ENCODE measurements at regions of chr17 and their contacts with region 1.

Region 1: GRCh38 chr17:78250891-78251794 is 19.7 kb downstream of the TMEM235 start:
- DNase-seq: peak; percentile 86 to 97
- H3K4me3 ChIP-seq: peak overlapping the region in 3 of 4 experiments; percentile 6 to 23 (median 17); a peak in 1 of 8 replicates
- H3K27ac ChIP-seq: no peak overlapping the region
- H3K4me1 ChIP-seq: peaks cover 0 to 23% (median 13%) of the 10 kb centered on the region in 4 experiments; a peak in 5 of 7 replicates
- H3K27me3 ChIP-seq: no peaks in the 10 kb centered on the region
- CTCF ChIP-seq: peak; percentile 99
- EP300 ChIP-seq: no peak; a peak in 1 of 3 replicates
- POLR2A ChIP-seq: no peak
- RAD21 ChIP-seq: peak; percentile 93 to 95

Region 2: DNA sequence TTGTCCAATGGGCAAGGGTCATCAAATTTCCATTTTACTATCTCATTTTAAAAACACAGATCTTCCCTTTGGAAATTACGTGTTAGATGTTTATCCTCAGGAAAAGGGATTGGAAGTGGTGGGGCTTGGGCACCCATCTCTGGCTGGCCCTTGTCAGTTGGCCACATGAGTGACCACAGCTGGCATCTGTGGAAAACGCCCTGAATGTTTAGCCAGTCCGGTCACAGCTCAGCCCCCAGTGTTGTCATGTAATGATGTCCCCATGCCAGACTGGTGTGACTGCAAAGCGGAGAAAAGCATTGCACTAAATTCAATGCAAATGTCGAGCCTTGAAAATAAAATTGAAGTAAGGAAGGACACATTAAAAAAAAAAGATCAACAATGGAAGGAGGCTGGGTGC is 175.6 kb before region 1 on chr17:
- CTCF ChIA-PET with region 1: no interaction called
- POLR2A ChIA-PET with region 1: no interaction called
- DNase-seq: no peak
- H3K4me3 ChIP-seq: no peak overlapping the region
- H3K27ac ChIP-seq: no peak overlapping the region
- H3K4me1 ChIP-seq: no peaks in the 10 kb centered on the region
- H3K27me3 ChIP-seq: no peaks in the 10 kb centered on the region
- CTCF ChIP-seq: no peak
- EP300 ChIP-seq: no peak
- POLR2A ChIP-seq: no peak
- RAD21 ChIP-seq: no peak

Region 3: DNA sequence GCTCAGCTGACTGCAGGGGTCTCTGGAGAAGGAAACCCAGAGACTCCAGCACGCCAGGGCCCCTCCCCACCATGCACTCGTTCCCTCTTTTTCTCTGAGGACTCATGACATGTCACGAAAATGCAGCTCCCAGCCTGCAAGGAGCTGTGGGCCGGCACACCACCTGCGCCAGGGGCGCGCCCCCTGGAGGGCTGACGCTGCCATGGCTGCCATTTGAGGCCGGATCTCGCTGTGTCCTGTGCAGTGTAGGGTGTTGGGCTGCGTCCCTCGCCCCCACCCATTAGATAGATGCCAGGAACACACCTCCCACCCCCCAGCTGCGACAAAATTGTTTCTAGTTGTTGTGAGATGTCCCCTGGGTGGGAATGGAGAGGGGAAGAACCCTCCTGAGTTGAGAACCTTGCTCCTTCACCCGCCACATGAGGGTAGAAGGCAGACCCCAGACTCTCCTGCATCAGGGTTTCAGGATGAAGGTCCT is 74.6 kb before region 1 on chr17:
- CTCF ChIA-PET with region 1: interaction called, 44 read pairs
- POLR2A ChIA-PET with region 1: interaction called, 6 read pairs
- DNase-seq: peak in 1 of 2 experiments; percentile 92
- H3K4me3 ChIP-seq: no peak overlapping the region
- H3K27ac ChIP-seq: no peak overlapping the region
- H3K4me1 ChIP-seq: peaks cover 5 to 17% (median 7%) of the 10 kb centered on the region in 4 experiments
- H3K27me3 ChIP-seq: no peaks in the 10 kb centered on the region
- CTCF ChIP-seq: peak; percentile 89 to 99 (median 94)
- EP300 ChIP-seq: no peak
- POLR2A ChIP-seq: peak in 1 of 2 experiments; percentile 49; a peak in 1 of 3 replicates
- RAD21 ChIP-seq: peak; percentile 48 to 70

Region 4: DNA sequence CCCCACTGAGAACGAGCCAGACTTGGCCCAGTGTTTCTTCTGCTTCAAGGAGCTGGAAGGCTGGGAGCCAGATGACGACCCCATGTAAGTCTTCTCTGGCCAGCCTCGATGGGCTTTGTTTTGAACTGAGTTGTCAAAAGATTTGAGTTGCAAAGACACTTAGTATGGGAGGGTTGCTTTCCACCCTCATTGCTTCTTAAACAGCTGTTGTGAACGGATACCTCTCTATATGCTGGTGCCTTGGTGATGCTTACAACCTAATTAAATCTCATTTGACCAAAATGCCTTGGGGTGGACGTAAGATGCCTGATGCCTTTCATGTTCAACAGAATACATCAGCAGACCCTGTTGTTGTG is 36.5 kb before region 1 on chr17:
- CTCF ChIA-PET with region 1: interaction called, 35 read pairs
- POLR2A ChIA-PET with region 1: interaction called, 3 read pairs
- DNase-seq: no peak
- H3K4me3 ChIP-seq: peak overlapping the region; percentile 85 to 94 (median 90)
- H3K27ac ChIP-seq: no peak overlapping the region
- H3K4me1 ChIP-seq: peaks cover 0 to 8% (median 4%) of the 10 kb centered on the region in 4 experiments; a peak in 4 of 7 replicates
- H3K27me3 ChIP-seq: no peaks in the 10 kb centered on the region
- CTCF ChIP-seq: no peak
- EP300 ChIP-seq: no peak
- POLR2A ChIP-seq: no peak
- RAD21 ChIP-seq: no peak

Region 5: DNA sequence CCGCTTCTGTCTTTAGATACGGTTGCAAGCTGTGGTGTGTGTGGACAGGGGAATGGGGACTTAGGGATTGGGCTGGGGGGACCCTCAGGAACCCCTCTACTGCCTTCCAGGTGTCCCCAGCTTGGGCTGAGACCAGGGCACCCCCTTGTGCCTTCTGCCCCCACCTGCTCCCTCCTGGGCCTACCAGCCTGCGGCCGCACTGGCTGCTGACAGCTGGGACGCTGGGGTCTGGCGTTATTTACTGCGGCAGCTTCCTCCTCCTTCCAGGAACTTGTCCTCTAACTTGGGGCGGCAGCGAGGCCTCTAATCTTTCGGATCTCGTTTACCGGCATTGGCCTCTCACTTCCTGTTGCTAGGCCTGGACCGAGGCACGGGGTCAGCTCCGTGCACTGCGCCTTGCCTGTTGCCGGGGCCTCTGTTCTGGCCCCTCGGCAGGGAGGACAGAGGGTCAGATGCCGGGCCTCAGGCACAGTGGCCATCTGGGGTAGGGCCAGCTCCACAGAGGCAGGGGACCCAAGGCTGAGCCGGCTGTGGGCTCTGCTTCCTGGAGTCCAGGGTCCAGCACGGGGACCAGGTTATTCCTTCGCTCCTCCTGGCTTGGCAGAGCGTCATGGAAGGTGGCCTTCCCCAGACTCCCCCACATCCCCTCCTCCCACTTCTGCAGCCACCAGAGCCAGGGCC is 12.1 kb after region 1 on chr17:
- CTCF ChIA-PET with region 1: interaction called, 50 read pairs
- POLR2A ChIA-PET with region 1: interaction called, 23 read pairs
- DNase-seq: peak in 1 of 2 experiments; percentile 49
- H3K4me3 ChIP-seq: no peak overlapping the region
- H3K27ac ChIP-seq: no peak overlapping the region
- H3K4me1 ChIP-seq: peaks cover 0 to 29% (median 22%) of the 10 kb centered on the region in 4 experiments; a peak in 6 of 7 replicates
- H3K27me3 ChIP-seq: no peaks in the 10 kb centered on the region; a peak in 2 of 7 replicates
- CTCF ChIP-seq: no peak
- EP300 ChIP-seq: no peak
- POLR2A ChIP-seq: no peak
- RAD21 ChIP-seq: no peak

Region 6: DNA sequence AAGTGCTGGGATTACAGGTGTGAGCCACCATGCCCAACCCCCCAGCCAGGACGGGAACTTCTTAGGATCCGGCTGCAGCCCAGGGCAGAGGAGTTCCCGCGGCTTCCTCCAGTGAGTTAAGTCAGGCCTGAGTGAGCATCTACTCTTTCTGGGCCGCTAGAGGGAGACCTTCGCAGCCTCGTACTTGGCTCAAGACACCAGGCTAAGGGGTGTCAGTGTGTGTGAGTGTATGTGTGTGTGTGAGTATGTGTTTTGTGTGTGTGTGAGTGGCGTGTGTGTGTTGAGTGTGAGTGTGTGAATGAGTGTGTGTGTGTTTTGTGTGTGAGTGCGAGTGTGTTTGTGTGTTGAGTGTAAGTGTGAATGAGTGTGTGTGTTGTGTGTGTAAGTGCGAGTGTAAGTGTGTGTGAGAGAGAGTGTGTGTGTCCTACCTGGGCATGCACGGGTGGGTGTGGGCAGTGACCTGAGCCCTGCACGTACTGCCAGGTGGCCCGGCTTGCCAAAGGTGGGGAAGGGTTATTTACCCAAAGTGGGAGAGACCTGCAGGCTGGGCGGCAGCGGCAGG is 38.7 kb after region 1 on chr17:
- CTCF ChIA-PET with region 1: interaction called, 11 read pairs
- POLR2A ChIA-PET with region 1: no interaction called
- DNase-seq: peak; percentile 75 to 76
- H3K4me3 ChIP-seq: no peak overlapping the region
- H3K27ac ChIP-seq: no peak overlapping the region
- H3K4me1 ChIP-seq: no peaks in the 10 kb centered on the region; a peak in 2 of 7 replicates
- H3K27me3 ChIP-seq: no peaks in the 10 kb centered on the region
- CTCF ChIP-seq: peak; percentile 90 to 95 (median 92)
- EP300 ChIP-seq: 0 out of 3 replicates have a peak, but pooled peaks of 1 of the 2 experiments have one; percentile 20
- POLR2A ChIP-seq: no peak
- RAD21 ChIP-seq: peak; percentile 82 to 89

Region 7: GRCh38 chr17:78341559-78342448 is 90.7 kb after region 1 on chr17:
- CTCF ChIA-PET with region 1: interaction called, 13 read pairs
- POLR2A ChIA-PET with region 1: interaction called, 3 read pairs
- DNase-seq: peak in 1 of 2 experiments; percentile 80
- H3K4me3 ChIP-seq: peak overlapping the region; percentile 29 to 61 (median 32); a peak in 6 of 8 replicates
- H3K27ac ChIP-seq: no peak overlapping the region
- H3K4me1 ChIP-seq: peaks cover 0 to 17% (median 14%) of the 10 kb centered on the region in 4 experiments; a peak in 5 of 7 replicates
- H3K27me3 ChIP-seq: peaks cover 0 to 23% (median 13%) of the 10 kb centered on the region in 4 experiments; a peak in 5 of 7 replicates
- CTCF ChIP-seq: no peak
- EP300 ChIP-seq: no peak
- POLR2A ChIP-seq: no peak
- RAD21 ChIP-seq: no peak

Measured in H1 (cell line).